Mammary epithelial cell (primary cell): ENCODE measurements at regions of chr10 and their contacts with region 1.

Region 1: DNA sequence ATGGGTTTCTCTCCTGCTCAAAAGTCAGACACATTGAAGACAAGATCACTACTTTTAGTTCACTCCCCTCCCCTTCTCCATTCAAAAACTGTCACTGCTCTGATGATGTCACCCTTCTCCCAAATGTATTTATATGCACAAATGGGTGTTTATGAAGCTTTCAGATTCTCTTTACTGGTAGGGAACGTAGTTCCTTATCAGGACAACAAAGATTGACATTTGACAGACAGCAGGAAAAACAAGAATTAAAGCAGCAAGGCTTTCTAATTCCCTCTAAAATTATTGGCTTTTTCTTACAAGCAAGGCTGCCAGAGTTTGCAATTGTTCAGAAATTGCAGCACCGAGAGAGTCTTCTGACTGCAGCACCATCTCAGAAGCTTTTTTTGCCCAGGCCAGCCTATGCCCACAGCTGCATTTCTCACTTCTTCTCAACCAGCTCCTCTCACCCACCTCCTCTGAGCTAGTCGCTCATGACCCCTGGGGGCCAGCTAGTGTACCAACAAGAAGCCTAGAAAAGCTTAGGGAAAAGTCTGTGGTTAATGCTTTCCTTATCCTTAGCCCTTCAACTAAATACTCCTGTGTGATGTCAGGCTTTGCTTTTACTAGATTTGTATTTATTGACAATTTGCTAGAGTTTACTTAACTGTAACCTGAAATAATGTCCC is 265.1 kb downstream of the HTR7 start:
- DNase-seq: peak; percentile 62
- H3K4me3 ChIP-seq: no peak overlapping the region
- H3K27ac ChIP-seq: no peak overlapping the region
- H3K4me1 ChIP-seq: peaks cover 4% of the 10 kb centered on the region
- H3K27me3 ChIP-seq: no peaks in the 10 kb centered on the region
- CTCF ChIP-seq: peak; percentile 63 to 79

Region 2: GRCh38 chr10:90319188-90319914 is 273.4 kb before region 1 on chr10:
- CTCF ChIA-PET with region 1: no interaction called
- dilution Hi-C with region 1: no loop called
- in situ Hi-C with region 1: no loop called
- intact Hi-C with region 1: no loop called
- DNase-seq: peak; percentile 90
- H3K4me3 ChIP-seq: no peak overlapping the region
- H3K27ac ChIP-seq: peak overlapping the region; percentile 21
- H3K4me1 ChIP-seq: peaks cover 20% of the 10 kb centered on the region
- H3K27me3 ChIP-seq: no peaks in the 10 kb centered on the region
- CTCF ChIP-seq: no peak

Region 3: DNA sequence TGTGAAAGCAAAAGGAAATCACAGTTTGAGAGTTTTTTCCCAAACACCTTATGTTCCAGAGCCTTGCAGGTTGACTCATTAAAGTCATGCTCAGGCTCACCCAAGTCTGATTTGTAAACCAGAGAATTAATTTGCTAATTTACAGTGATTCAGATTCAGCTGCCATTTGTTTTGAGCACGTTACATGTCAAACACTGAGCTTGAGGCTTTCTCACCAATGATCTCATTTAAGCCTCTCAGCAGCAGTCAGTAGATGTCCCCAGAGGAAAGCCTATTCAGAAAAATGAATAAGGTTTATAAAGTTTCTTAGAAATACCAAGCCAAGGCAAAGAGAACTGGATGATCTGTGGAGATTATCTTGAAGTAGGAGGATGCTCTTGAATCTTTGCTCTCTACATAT is 155.3 kb before region 1 on chr10:
- CTCF ChIA-PET with region 1: no interaction called
- dilution Hi-C with region 1: no loop called
- in situ Hi-C with region 1: no loop called
- intact Hi-C with region 1: loop called (anchors 2 kb)
- DNase-seq: peak; percentile 31
- H3K4me3 ChIP-seq: no peak overlapping the region
- H3K27ac ChIP-seq: no peak overlapping the region
- H3K4me1 ChIP-seq: no peaks in the 10 kb centered on the region
- H3K27me3 ChIP-seq: no peaks in the 10 kb centered on the region
- CTCF ChIP-seq: peak in 1 of 2 donors; percentile 41